ENCODE measurements at regions of chr4 and their contacts with region 1.

Region 1: DNA sequence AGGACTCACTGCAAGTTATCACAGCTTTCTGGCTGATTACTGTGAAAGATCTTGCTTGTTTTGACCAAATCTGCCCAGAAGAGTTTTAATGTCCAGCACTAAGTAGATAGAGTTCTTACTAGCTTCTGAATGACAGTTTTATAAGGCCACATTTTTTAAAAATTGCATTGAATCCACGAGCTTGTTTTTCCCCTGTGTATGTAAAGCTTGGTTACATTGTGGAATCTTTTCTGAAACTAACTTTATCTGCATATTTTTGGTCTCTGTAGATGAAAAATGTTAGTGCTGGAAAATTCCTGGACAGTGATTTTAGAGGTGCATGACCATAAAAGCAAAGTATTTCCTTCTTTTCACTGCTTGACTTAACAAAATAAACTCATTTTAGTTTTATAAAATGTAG is 650.3 kb upstream of the FAM241A start:
- DNase-seq: no peak
- H3K4me3 ChIP-seq: no peak overlapping the region
- H3K27ac ChIP-seq: no peak overlapping the region
- H3K4me1 ChIP-seq: no peaks in the 10 kb centered on the region
- H3K27me3 ChIP-seq: no peaks in the 10 kb centered on the region
- CTCF ChIP-seq: no peak
- EP300 ChIP-seq: no peak
- POLR2A ChIP-seq: no peak

Region 2: DNA sequence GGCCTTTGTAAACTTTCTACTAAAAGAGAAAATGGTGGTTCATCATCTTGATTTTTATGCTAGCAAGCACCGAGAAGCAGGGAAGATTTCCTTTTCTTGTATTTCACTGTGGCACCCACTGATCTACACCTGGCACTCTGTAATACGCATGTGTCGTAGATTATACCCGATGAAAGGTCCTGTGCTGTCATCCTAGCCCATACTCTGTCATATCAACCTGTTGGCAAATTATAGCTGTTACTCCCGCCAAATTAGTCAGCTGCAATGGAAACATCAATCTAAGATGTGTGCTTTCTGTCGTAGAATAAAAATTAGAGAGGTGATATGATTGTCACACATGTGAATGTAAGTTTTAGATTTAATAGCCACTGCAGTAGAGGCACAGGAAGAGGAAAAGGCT is 608.7 kb before region 1 on chr4:
- in situ Hi-C with region 1: no loop called
- intact Hi-C with region 1: loop called (anchors 5 kb)
- DNase-seq: no peak
- H3K4me3 ChIP-seq: no peak overlapping the region
- H3K27ac ChIP-seq: no peak overlapping the region
- H3K4me1 ChIP-seq: no peaks in the 10 kb centered on the region
- H3K27me3 ChIP-seq: no peaks in the 10 kb centered on the region
- CTCF ChIP-seq: no peak
- EP300 ChIP-seq: no peak
- POLR2A ChIP-seq: no peak